ENCODE measurements at regions of chr16 and their contacts with region 1.

Region 1: GRCh38 chr16:49441366-49441780 is 67.8 kb downstream of the C16orf78 start:
- DNase-seq: peak; percentile 93
- H3K4me3 Mint-ChIP-seq: peak overlapping the region; percentile 39
- H3K27ac Mint-ChIP-seq: peak overlapping the region; percentile 80
- H3K4me1 Mint-ChIP-seq: peaks cover 31% of the 10 kb centered on the region
- H3K27me3 Mint-ChIP-seq: peaks cover 25% of the 10 kb centered on the region

Region 2: DNA sequence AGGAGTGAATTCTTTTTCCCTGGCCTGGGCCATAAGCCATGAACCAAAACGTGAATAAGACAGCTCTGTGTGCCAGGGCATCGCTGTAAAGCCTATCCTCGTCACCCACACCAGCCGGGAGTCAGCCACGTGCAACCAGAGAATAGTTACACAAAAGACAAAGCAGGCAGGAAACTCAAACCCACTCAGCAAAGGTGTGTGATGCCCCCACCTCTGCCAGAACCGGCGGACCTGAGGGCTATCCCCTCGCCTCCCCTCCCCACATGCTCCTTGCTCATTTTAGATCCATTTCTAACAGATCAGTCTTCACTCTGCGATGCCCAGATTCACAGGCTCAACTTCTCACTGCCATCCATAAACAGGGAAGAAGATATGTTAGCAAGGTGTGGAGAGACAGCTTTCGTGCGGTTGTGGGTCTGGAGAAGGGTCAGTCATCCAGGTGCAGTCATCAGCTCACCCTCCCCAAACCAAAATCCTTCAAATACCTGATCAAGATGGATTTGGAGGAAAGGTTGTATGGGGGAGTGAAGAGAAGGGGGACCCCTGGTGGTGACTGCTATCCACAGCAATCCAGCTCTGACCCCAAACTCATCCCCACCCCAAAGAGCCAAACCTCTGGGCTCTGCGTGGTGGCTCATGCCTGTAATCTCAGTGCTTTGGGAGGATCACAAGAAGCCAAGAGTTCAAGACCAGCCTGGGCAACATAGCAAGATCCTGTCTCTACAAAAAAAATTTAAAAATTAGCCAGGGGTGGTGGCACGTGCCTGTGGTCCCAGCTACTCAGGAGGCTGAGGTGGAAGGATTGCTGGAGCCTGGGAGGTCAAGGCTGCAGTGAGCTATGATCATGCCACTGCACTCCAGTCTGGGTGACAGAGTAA is 151.4 kb after region 1 on chr16:
- CTCF ChIA-PET with region 1: interaction called, 12 read pairs
- DNase-seq: peak; percentile 58
- H3K4me3 Mint-ChIP-seq: no peak overlapping the region
- H3K27ac Mint-ChIP-seq: no peak overlapping the region
- H3K4me1 Mint-ChIP-seq: peaks cover 15% of the 10 kb centered on the region
- H3K27me3 Mint-ChIP-seq: peaks cover 31% of the 10 kb centered on the region

Region 3: DNA sequence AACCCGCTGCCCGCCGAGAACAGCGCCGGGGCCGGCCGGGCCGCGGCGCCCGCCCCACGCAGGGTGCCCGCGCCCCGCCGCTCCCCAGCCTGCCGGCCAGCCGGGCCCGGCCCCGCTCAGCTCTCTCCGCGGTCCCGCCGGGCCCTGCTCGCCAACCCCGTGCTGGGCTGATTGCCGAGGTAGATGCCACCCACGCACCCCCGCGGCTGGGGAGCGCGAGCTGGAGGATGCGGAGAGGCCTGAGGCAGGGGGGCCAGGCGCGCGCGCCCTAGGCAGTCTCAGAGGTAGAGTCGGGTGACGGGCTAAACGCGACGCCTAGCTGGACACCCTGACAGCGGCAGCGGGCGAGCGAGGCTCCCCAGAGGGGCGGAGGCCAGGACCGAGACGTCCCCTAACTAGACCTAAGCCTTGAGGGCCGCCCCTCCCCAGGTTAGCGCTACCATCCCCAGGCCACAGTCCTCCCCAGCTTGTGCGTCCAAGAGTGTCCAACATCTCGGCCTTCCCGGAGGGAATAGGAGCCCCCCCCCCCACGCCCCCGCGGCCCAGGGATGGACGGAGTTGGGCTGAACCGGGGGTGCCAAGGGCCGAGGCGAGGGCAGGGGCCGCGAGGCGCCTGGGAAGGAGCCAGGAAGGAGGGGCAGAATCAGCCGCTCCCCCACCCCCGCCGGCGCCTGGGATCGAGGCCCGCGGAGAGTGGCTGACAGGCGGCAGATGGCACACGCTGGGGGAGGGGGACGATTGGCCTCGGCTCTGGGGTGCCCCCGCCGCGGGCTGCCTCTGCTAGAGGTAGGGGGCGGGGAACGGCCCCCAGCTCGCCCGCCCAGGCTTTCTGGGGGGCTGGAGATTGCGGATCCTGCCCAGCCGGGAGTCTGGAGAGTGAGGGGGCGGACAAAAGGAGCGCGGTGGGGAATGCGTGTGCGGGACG is 417.1 kb after region 1 on chr16:
- CTCF ChIA-PET with region 1: no interaction called
- DNase-seq: peak; percentile 39
- H3K4me3 Mint-ChIP-seq: peak overlapping the region; percentile 12
- H3K27ac Mint-ChIP-seq: no peak overlapping the region
- H3K4me1 Mint-ChIP-seq: peaks cover 17% of the 10 kb centered on the region
- H3K27me3 Mint-ChIP-seq: peaks cover 91% of the 10 kb centered on the region